WTC11 (cell line): ENCODE measurements at regions of chr12 and their contacts with region 1.

Region 1: DNA sequence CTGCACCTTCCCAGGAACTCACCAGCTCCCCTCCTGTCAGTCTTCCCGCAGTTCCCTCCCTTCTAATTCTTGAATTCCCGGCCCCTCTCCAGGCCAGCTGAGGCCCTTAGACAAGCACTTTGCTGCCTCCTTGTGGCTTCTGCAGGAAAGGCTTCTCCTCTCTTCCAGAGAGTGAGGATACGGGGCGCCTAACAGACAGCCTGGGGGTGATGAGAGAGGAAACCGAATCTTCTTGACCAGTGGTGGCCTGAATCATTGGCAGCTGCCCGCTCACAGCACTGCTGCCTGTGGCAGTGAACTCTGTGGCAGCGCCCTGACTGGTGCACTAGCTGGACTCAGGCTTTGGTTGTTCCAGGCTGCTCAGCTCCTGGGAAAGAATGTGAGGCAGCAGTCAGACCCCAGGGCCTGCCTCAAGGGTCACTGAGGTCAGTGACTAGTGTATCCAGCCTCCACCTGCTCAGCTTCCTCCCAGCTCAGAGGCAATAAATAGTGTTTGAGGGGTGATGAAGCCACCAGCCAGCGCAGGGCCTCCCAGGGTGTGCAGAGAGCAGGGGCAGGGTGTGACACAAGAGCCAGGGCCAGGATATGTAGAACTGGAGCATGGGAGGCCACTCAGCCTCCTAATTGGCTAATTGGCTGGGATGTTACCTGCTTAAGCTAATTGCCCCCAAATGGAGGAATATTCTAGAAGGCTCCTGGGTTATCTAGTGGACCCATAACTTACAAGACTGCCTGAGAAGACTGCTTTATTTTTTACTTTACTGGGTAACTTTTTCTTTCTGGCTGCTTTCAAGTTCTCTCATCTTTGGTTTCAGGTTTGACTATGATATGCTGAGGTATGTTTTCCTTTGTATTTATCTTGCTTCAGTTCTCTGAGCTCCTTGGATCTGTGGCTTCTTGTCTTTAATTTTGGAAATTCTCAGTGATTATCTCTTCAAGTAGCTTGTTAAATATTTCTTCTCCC is 12.9 kb upstream of the MCRS1 start:
- DNase-seq: peak; percentile 94
- ATAC-seq: peak; percentile 96
- H3K4me3 Mint-ChIP-seq: no peak overlapping the region
- H3K27ac Mint-ChIP-seq: no peak overlapping the region
- H3K4me1 Mint-ChIP-seq: peaks cover 8% of the 10 kb centered on the region
- H3K27me3 Mint-ChIP-seq: no peaks in the 10 kb centered on the region
- CTCF ChIP-seq: peak; percentile 66

Region 2: GRCh38 chr12:49331380-49332222 is 249.3 kb before region 1 on chr12:
- CTCF ChIA-PET with region 1: interaction called, 16 read pairs
- POLR2A ChIA-PET with region 1: no interaction called
- DNase-seq: peak; percentile 77
- ATAC-seq: peak; percentile 76
- H3K4me3 Mint-ChIP-seq: peak overlapping the region; percentile 77; the same call in 1 of the 2 replicates
- H3K27ac Mint-ChIP-seq: no peak overlapping the region
- H3K4me1 Mint-ChIP-seq: peaks cover 20% of the 10 kb centered on the region
- H3K27me3 Mint-ChIP-seq: peaks cover 52% of the 10 kb centered on the region
- CTCF ChIP-seq: peak; percentile 42; the same call in 1 of the 2 replicates

Region 3: GRCh38 chr12:49366652-49367380 is 214.0 kb before region 1 on chr12:
- CTCF ChIA-PET with region 1: interaction called, 26 read pairs
- POLR2A ChIA-PET with region 1: no interaction called
- DNase-seq: peak; percentile 92
- ATAC-seq: peak; percentile 89
- H3K4me3 Mint-ChIP-seq: peak overlapping the region; percentile 89
- H3K27ac Mint-ChIP-seq: peak overlapping the region; percentile 97
- H3K4me1 Mint-ChIP-seq: peaks cover 30% of the 10 kb centered on the region
- H3K27me3 Mint-ChIP-seq: peaks cover 12% of the 10 kb centered on the region
- CTCF ChIP-seq: no peak

Region 4: GRCh38 chr12:49538510-49539403 is 42.1 kb before region 1 on chr12 and contains the start of gene KCNH3:
- CTCF ChIA-PET with region 1: interaction called, 12 read pairs
- POLR2A ChIA-PET with region 1: no interaction called
- DNase-seq: peak; percentile 75
- ATAC-seq: peak; percentile 25
- H3K4me3 Mint-ChIP-seq: peak within 1 kb of the TSS; percentile 71
- H3K27ac Mint-ChIP-seq: no peak within 1 kb of the TSS
- H3K4me1 Mint-ChIP-seq: peaks cover 31% of the 10 kb centered on the region
- H3K27me3 Mint-ChIP-seq: peaks cover 92% of the 10 kb centered on the region
- CTCF ChIP-seq: no peak
- total RNA-seq, gene KCNH3: 0.27 to 0.44 TPM (median 0.44 TPM) in 3 replicates

Region 5: GRCh38 chr12:49553512-49554088 is 27.3 kb before region 1 on chr12:
- CTCF ChIA-PET with region 1: interaction called, 99 read pairs
- POLR2A ChIA-PET with region 1: interaction called, 4 read pairs
- DNase-seq: no peak
- ATAC-seq: peak; percentile 62
- H3K4me3 Mint-ChIP-seq: no peak overlapping the region
- H3K27ac Mint-ChIP-seq: no peak overlapping the region
- H3K4me1 Mint-ChIP-seq: peaks cover 3% of the 10 kb centered on the region; the same call in 1 of the 2 replicates
- H3K27me3 Mint-ChIP-seq: peaks cover 33% of the 10 kb centered on the region
- CTCF ChIP-seq: no peak

Region 6: GRCh38 chr12:49609746-49610089 is 28.9 kb after region 1 on chr12:
- CTCF ChIA-PET with region 1: interaction called, 44 read pairs
- POLR2A ChIA-PET with region 1: no interaction called
- DNase-seq: no peak
- ATAC-seq: peak; percentile 44
- H3K4me3 Mint-ChIP-seq: no peak overlapping the region
- H3K27ac Mint-ChIP-seq: no peak overlapping the region
- H3K4me1 Mint-ChIP-seq: 0 out of 2 replicates have a peak, but pooled peaks cover 2% of the 10 kb centered on the region
- H3K27me3 Mint-ChIP-seq: peaks cover 17% of the 10 kb centered on the region
- CTCF ChIP-seq: no peak